ENCODE measurements at regions of chr16 and their contacts with region 1.

Region 1: GRCh38 chr16:87305505-87306391 is 11.4 kb downstream of the C16orf95 start:
- DNase-seq: no peak
- CTCF ChIP-seq: no peak

Region 2: GRCh38 chr16:87316923-87317749 is 11.4 kb after region 1 on chr16 and contains the start of gene C16orf95:
- CTCF ChIA-PET with region 1: interaction called, 20 read pairs
- POLR2A ChIA-PET with region 1: no interaction called
- DNase-seq: peak; percentile 99
- CTCF ChIP-seq: peak; percentile 58